AG04449 (cell line): ENCODE measurements at regions of chr9 and their contacts with region 1.

Region 1: GRCh38 chr9:72364679-72365524 is at the start of gene ZFAND5:
- DNase-seq: peak; percentile 89
- H3K4me3 ChIP-seq: peak within 1 kb of the TSS; percentile 77
- CTCF ChIP-seq: no peak

Region 2: GRCh38 chr9:72431036-72431435 is 66.1 kb after region 1 on chr9:
- CTCF ChIA-PET with region 1: interaction called, 5 read pairs
- POLR2A ChIA-PET with region 1: interaction called, 11 read pairs
- DNase-seq: no peak
- H3K4me3 ChIP-seq: no peak overlapping the region
- CTCF ChIP-seq: no peak

Region 3: DNA sequence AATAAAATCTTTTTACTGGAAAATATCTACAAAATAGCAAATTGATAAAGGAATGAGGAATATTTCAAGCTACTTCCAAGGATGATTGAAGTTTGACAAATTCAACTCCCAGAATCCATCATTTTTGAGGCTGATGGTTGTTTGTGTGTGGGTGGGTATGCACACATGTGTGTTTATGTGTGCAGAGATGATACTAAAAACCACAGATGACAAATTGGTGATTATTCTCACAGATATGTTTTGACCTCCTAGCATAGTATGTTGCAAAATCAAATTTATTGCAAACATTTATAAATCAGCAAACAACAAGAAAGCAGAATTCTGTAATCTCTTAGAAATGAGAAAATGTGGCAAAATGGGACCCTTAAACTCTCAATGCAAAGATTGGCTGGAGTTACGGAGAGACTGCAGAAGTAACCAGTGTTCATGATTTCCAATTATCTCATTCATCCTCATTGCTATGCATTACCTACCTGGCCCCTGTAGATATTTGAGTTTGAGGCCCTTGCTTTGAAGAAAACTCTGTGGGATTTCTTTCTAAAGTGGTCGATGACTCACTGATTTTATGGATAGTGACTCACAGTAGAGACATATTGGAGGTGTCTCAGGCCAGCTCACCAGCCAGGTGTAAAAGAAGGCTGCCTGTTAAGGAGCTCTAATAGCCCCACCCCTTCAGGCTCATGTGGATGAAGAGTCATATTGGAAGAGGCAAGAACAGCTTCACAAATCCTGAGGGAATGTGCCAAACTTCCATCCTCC is 111.9 kb after region 1 on chr9:
- CTCF ChIA-PET with region 1: no interaction called
- POLR2A ChIA-PET with region 1: interaction called, 16 read pairs
- DNase-seq: no peak
- H3K4me3 ChIP-seq: no peak overlapping the region
- CTCF ChIP-seq: no peak

Region 4: GRCh38 chr9:72577212-72577753 is 212.4 kb after region 1 on chr9:
- CTCF ChIA-PET with region 1: interaction called, 5 read pairs
- POLR2A ChIA-PET with region 1: interaction called, 14 read pairs
- DNase-seq: no peak
- H3K4me3 ChIP-seq: no peak overlapping the region
- CTCF ChIP-seq: no peak

Region 5: DNA sequence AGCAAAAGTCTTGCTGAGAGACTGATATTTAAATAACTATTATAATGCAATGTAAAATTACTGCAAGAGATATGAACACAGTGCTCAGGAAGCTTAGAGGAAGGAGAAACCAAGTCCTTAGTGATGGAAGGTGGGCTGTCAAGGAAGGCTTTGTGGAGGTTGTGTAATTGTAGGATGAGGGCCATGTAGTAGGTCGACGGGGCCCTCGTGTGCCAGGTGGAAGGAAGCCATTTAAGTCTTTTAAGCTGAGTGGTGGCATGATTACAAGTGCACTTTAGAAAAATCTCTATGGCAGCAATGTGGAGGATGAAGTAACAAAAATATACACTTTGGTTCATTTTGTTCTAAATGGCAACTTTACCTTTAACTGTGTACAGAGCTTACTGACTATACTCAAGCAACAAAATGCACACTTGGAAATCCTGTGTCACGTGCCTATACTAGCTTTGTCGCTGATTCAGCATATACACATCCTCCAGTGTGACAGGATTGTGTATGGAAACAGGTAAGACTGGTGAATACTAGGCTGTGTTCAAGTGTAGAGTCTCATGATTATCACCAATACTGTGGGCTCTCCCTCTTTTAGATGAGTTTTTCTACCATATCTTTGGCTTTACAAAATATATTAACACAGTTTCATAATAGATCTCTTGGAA is 235.1 kb after region 1 on chr9:
- CTCF ChIA-PET with region 1: interaction called, 9 read pairs
- POLR2A ChIA-PET with region 1: interaction called, 15 read pairs
- DNase-seq: no peak
- H3K4me3 ChIP-seq: no peak overlapping the region
- CTCF ChIP-seq: no peak